Activated CD4-positive, alpha-beta memory T cell treated with anti-CD3 and anti-CD28 coated beads for 36 hours (primary cell): ENCODE measurements at regions of chr4 and their contacts with region 1.

Region 1: GRCh38 chr4:70183168-70183939 is 12.2 kb upstream of the ODAM start:
- DNase-seq: peak; percentile 12
- H3K4me3 Mint-ChIP-seq: no peak overlapping the region
- H3K27ac Mint-ChIP-seq: no peak overlapping the region
- H3K4me1 Mint-ChIP-seq: no peaks in the 10 kb centered on the region
- H3K27me3 Mint-ChIP-seq: no peaks in the 10 kb centered on the region

Region 2: DNA sequence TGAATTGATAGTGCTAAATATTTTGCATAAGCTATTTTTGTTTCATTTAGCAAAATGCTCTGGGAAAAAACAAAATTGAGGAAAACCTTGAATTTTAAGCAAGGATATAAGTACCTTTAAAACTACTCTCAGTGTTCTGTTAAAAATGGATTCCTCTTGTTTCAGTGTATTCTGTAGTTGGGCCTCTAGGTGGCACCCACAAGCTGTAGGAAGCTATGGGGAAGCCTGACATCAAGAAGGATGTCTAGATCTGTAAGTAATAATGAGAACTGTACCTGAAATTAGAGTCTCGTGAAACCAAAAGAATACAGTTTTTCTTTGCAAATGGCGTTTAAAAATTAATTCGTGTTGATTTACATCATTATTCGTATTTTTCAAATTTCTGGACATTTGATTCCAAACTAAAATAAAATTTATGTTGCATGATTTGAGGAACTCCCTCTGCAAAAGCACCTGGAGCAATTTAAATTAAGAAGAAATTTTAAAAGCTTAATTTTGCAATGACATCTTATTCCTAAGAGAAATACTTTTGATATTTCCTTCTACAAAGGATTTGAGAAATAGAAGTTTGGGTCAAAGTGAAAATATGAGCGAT is 1684.8 kb before region 1 on chr4:
- CTCF ChIA-PET with region 1: no interaction called
- POLR2A ChIA-PET with region 1: no interaction called
- intact Hi-C with region 1: loop called (anchors 5 kb)
- DNase-seq: peak; percentile 75
- H3K4me3 Mint-ChIP-seq: no peak overlapping the region
- H3K27ac Mint-ChIP-seq: no peak overlapping the region
- H3K4me1 Mint-ChIP-seq: peaks cover 7% of the 10 kb centered on the region
- H3K27me3 Mint-ChIP-seq: no peaks in the 10 kb centered on the region

Region 3: GRCh38 chr4:69823481-69824186 is 359.7 kb before region 1 on chr4:
- CTCF ChIA-PET with region 1: no interaction called
- POLR2A ChIA-PET with region 1: no interaction called
- intact Hi-C with region 1: loop called (anchors 5 kb)
- DNase-seq: peak; percentile 55
- H3K4me3 Mint-ChIP-seq: no peak overlapping the region
- H3K27ac Mint-ChIP-seq: no peak overlapping the region
- H3K4me1 Mint-ChIP-seq: peaks cover 2% of the 10 kb centered on the region
- H3K27me3 Mint-ChIP-seq: no peaks in the 10 kb centered on the region

Region 4: DNA sequence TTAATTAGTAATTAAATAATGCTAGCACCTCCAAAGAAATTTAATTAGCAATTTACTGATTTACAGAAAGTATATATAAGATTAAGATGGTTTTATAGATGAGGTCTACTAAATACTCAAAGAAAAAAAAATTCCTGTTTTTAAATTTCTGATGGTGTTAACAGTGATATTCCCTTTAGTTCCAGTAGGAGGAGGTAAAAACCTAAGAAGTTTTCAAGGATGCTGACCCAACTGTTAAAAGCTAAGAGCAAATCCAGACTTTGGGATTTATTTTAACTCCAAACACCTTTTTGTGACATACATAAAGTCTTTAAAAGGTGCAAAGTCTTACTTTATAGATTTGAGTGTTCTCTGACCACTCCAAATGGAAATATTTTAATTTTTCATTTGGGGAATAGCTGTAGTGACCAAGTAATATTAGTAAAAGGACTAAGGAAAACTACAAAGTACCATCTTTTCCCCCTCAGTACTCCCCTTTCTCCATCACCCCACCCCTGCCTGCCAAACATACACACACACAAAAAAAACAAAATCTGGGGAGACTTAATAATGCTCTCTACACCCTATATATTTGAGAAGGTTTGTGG is 286.7 kb before region 1 on chr4:
- CTCF ChIA-PET with region 1: no interaction called
- POLR2A ChIA-PET with region 1: no interaction called
- intact Hi-C with region 1: loop called (anchors 5 kb)
- DNase-seq: no peak
- H3K4me3 Mint-ChIP-seq: no peak overlapping the region
- H3K27ac Mint-ChIP-seq: no peak overlapping the region
- H3K4me1 Mint-ChIP-seq: no peaks in the 10 kb centered on the region
- H3K27me3 Mint-ChIP-seq: peaks cover 5% of the 10 kb centered on the region

Region 5: DNA sequence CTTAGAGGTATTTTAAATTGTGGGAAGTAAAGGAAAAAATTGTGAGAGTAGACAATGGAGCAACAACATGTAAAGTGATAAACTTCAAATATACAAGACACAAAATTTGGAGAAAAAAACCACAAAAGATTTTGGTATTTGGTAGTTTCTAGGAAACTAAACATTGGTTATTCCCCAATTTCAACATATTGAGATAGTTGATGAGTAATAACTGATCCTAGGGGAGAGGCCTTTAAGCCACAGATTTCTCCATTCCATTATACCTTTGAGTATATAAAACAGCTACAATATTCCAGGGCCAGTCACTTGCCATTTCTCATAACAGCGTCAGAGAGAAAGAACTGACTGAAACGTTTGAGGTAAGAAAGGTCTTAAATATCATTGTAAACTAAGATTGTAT is 42.5 kb after region 1 on chr4 and contains the start of gene FDCSP:
- CTCF ChIA-PET with region 1: no interaction called
- POLR2A ChIA-PET with region 1: no interaction called
- intact Hi-C with region 1: no loop called
- DNase-seq: no peak
- H3K4me3 Mint-ChIP-seq: no peak within 1 kb of the TSS
- H3K27ac Mint-ChIP-seq: no peak within 1 kb of the TSS
- H3K4me1 Mint-ChIP-seq: no peaks in the 10 kb centered on the region
- H3K27me3 Mint-ChIP-seq: no peaks in the 10 kb centered on the region
- total RNA-seq, gene FDCSP: not detected